ENCODE measurements at regions of chr3 and their contacts with region 1.

Region 1: DNA sequence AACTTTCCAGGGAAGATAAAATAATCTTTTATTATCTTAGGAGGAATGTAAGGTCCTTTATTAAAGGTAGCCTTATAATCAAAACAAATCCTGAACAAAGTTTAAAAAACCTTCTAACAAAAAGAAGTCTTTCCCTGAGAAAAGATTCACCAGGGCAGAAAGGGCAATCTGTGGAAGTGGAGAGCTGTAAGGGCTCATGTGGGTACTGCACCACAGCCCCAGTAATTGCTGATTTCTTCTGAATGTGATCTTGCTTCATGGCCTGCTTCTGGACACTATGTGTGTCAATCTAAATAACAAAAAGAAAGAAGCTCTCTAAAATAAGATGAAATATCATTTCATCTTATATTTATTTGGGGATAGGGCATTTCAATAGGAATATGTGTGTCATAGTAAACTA is 1501.6 kb downstream of the OTOL1 start:
- DNase-seq: no peak
- ATAC-seq: no peak
- H3K4me3 ChIP-seq: no peak overlapping the region
- H3K4me3 Mint-ChIP-seq: no peak overlapping the region
- H3K27ac ChIP-seq: no peak overlapping the region
- H3K27ac Mint-ChIP-seq: no peak overlapping the region
- H3K4me1 ChIP-seq: no peaks in the 10 kb centered on the region
- H3K4me1 Mint-ChIP-seq: no peaks in the 10 kb centered on the region
- H3K27me3 ChIP-seq: no peaks in the 10 kb centered on the region
- H3K27me3 Mint-ChIP-seq: no peaks in the 10 kb centered on the region
- CTCF ChIP-seq: no peak

Region 2: GRCh38 chr3:163011590-163011989 is 13.4 kb after region 1 on chr3:
- CTCF ChIA-PET with region 1: no interaction called
- POLR2A ChIA-PET with region 1: no interaction called
- intact Hi-C with region 1: loop called (anchors 1 kb)
- DNase-seq: no peak
- ATAC-seq: no peak
- H3K4me3 ChIP-seq: no peak overlapping the region
- H3K4me3 Mint-ChIP-seq: no peak overlapping the region
- H3K27ac ChIP-seq: no peak overlapping the region
- H3K27ac Mint-ChIP-seq: no peak overlapping the region
- H3K4me1 ChIP-seq: no peaks in the 10 kb centered on the region
- H3K4me1 Mint-ChIP-seq: no peaks in the 10 kb centered on the region
- H3K27me3 ChIP-seq: no peaks in the 10 kb centered on the region
- H3K27me3 Mint-ChIP-seq: no peaks in the 10 kb centered on the region
- CTCF ChIP-seq: no peak

Measured in B cell (primary cell).